ENCODE measurements at regions of chr12 and their contacts with region 1.

Region 1: GRCh38 chr12:124518051-124518932 is 49.1 kb downstream of the NCOR2 start:
- DNase-seq: peak; percentile 94 to 100
- H3K4me3 ChIP-seq: peak overlapping the region; percentile 54 to 67
- H3K27ac ChIP-seq: peak overlapping the region; percentile 91 to 97
- H3K4me1 ChIP-seq: peaks cover 39 to 71% of the 10 kb centered on the region in 2 donors
- H3K27me3 ChIP-seq: no peaks in the 10 kb centered on the region
- CTCF ChIP-seq: no peak

Region 2: DNA sequence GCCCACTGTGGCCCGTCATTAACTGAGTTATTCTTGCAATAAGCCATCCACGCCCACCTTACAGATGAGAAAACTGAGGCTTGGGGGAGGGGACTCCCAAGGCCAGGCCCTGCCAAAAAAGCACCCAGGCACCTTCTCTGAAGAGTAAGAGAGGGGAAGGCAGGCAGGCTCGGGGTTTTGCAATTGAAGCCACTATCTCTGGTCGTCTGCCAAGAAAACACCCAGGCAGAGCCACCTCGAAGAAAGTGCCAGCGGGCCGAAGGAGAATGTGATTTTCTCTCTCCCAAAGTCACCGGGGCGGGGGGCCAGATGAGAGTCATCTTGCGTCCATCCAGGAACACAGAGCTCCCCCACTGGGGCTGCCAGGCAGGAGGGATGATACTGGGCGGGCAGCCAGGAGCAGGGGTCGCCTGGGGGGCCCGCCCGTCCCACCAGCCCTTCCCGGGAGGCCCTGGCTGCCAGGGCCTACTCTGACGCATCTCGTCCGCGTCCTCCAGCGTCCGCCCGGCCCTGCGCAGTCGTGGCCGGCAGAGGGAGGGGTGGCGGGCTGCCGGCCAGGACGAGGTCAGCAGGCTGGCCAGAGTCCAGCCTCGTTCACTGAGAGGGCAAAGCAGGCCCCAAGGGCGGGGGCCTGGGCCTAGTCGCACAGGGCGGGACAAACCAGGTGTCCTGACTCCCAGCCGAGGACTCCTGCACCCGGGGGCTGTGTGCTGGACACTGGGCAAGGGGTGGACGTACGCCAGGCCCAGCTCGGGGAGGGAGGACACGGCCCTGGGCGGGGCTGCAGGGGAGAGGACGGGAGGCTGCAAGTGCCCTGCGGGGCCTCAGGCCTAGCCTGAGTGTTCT is 149.0 kb before region 1 on chr12:
- intact Hi-C with region 1: loop called (anchors 5 kb)
- DNase-seq: peak; percentile 61 to 95
- H3K4me3 ChIP-seq: peak overlapping the region in 1 of 2 donors; percentile 37
- H3K27ac ChIP-seq: peak overlapping the region; percentile 83 to 87
- H3K4me1 ChIP-seq: peaks cover 26 to 34% of the 10 kb centered on the region in 2 donors
- H3K27me3 ChIP-seq: no peaks in the 10 kb centered on the region
- CTCF ChIP-seq: peak; percentile 46 to 73 (median 49)

Region 3: DNA sequence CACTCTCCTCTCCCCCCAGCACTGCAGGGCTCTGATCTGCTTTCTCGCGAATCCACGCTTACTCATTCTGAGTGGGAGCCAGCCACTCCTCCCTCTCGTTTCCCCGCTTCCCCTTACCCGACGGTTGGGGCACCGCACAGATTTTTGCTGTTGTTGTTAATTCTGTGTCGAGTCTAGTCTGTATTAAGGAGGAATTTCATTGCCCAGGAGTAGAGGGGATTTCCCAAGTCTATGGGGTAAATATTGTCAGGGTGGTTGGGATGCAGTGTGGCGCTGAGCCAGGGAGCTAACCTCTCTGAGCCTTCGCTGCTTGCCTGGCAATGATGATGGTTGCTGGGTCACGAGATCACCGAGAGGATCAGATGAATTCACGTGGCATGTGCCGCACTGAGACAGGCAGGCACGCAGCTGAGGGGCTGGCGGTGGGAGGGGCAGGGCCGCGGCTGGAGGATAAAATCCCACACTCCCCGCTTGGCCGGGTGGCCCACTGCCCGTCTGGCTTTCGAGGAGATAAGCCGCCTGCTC is 30.6 kb after region 1 on chr12:
- intact Hi-C with region 1: loop called (anchors 2 kb)
- DNase-seq: peak in 1 of 2 donors; percentile 83
- H3K4me3 ChIP-seq: peak overlapping the region in 1 of 2 donors; percentile 7
- H3K27ac ChIP-seq: peak overlapping the region in 1 of 2 donors; percentile 82
- H3K4me1 ChIP-seq: peaks cover 17 to 61% of the 10 kb centered on the region in 2 donors
- H3K27me3 ChIP-seq: no peaks in the 10 kb centered on the region
- CTCF ChIP-seq: no peak

Region 4: GRCh38 chr12:124675881-124676715 is 157.8 kb after region 1 on chr12:
- intact Hi-C with region 1: loop called (anchors 5 kb)
- DNase-seq: peak in 1 of 2 donors; percentile 84
- H3K4me3 ChIP-seq: peak overlapping the region; percentile 34 to 39
- H3K27ac ChIP-seq: peak overlapping the region; percentile 4 to 56
- H3K4me1 ChIP-seq: peaks cover 3 to 30% of the 10 kb centered on the region in 2 donors
- H3K27me3 ChIP-seq: no peaks in the 10 kb centered on the region
- CTCF ChIP-seq: no peak

Region 5: GRCh38 chr12:124767066-124767821 is 249.0 kb after region 1 on chr12:
- intact Hi-C with region 1: loop called (anchors 5 kb)
- DNase-seq: peak in 1 of 2 donors; percentile 89
- H3K4me3 ChIP-seq: no peak overlapping the region
- H3K27ac ChIP-seq: peak overlapping the region in 1 of 2 donors; percentile 79
- H3K4me1 ChIP-seq: peaks cover 24 to 37% of the 10 kb centered on the region in 2 donors
- H3K27me3 ChIP-seq: no peaks in the 10 kb centered on the region
- CTCF ChIP-seq: peak; percentile 97 to 100 (median 99)

Region 6: GRCh38 chr12:124814741-124815613 is 296.7 kb after region 1 on chr12:
- intact Hi-C with region 1: no loop called
- DNase-seq: no peak
- H3K4me3 ChIP-seq: no peak overlapping the region
- H3K27ac ChIP-seq: no peak overlapping the region
- H3K4me1 ChIP-seq: no peaks in the 10 kb centered on the region
- H3K27me3 ChIP-seq: no peaks in the 10 kb centered on the region
- CTCF ChIP-seq: no peak